Left colon (tissue), 2 donors: ENCODE measurements at regions of chr2 and their contacts with region 1.

Region 1: GRCh38 chr2:223797811-223798721 is 39.3 kb downstream of the AP1S3 start:
- DNase-seq: no peak
- ATAC-seq: no peak

Region 2: GRCh38 chr2:222973237-222973636 is 824.8 kb before region 1 on chr2:
- intact Hi-C with region 1: loop called in 1 of 2 experiments (anchors 5 kb)
- DNase-seq: no peak
- ATAC-seq: no peak

Region 3: GRCh38 chr2:223993621-223994232 is 195.7 kb after region 1 on chr2:
- intact Hi-C with region 1: no loop called
- DNase-seq: peak; percentile 50 to 78
- ATAC-seq: peak; percentile 87